Transverse colon (tissue), 4 donors: ENCODE measurements at regions of chr5 and their contacts with region 1.

Region 1: GRCh38 chr5:143824851-143825720 is 13.1 kb downstream of the HMHB1 start:
- DNase-seq: peak; percentile 86
- H3K4me3 ChIP-seq: no peak overlapping the region
- H3K27ac ChIP-seq: no peak overlapping the region
- H3K4me1 ChIP-seq: no peaks in the 10 kb centered on the region
- H3K27me3 ChIP-seq: no peaks in the 10 kb centered on the region
- CTCF ChIP-seq: peak; percentile 86 to 97 (median 94)
- EP300 ChIP-seq: no peak
- POLR2A ChIP-seq: no peak

Region 2: DNA sequence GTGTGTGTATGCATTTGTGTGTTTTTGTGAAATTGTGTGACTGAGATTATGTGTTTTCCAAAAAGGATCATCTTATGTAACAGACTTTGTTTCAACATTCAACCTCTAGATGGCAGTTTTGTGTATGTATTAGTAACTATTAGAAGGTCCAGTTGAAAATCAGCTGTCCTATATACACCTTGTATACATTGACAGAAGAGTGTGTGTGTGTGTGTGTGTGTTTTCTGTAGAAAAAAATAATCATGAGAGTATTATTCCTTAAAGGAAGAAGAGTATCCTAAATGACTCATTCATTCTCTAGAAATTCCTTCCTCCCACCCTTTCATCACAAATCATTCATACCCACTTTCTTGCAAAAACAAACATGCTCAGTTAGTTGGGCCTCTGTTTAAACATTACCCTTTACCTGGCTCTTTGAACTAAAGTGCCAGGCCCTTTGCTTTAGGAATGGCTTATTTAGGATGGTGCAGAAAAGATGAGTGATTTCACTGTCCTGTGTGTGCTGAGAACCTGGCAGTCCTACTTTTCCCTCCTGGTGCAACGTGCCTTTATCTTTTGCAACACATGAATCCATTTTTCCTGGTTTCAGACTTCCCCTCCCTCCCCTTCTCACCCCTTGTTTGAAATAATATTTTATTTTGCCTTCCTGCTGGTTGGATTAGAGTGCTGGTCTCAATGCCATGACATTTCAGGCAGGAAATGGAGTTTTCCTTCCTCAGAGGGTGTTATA is 902.7 kb before region 1 on chr5:
- in situ Hi-C with region 1: loop called in 1 of 4 experiments (anchors 10 kb)
- intact Hi-C with region 1: loop called (anchors 10 kb)
- DNase-seq: no peak
- H3K4me3 ChIP-seq: no peak overlapping the region
- H3K27ac ChIP-seq: no peak overlapping the region
- H3K4me1 ChIP-seq: peaks cover 0 to 18% (median 2%) of the 10 kb centered on the region in 4 donors
- H3K27me3 ChIP-seq: no peaks in the 10 kb centered on the region
- CTCF ChIP-seq: peak in 4 of 5 experiments; percentile 36 to 46 (median 44)
- EP300 ChIP-seq: no peak
- POLR2A ChIP-seq: no peak

Region 3: GRCh38 chr5:143002459-143003328 is 822.4 kb before region 1 on chr5:
- in situ Hi-C with region 1: loop called in 1 of 4 experiments (anchors 25 kb)
- intact Hi-C with region 1: no loop called
- DNase-seq: peak; percentile 54
- H3K4me3 ChIP-seq: no peak overlapping the region
- H3K27ac ChIP-seq: peak overlapping the region; percentile 34 to 71 (median 53)
- H3K4me1 ChIP-seq: peaks cover 0 to 33% (median 10%) of the 10 kb centered on the region in 4 donors
- H3K27me3 ChIP-seq: no peaks in the 10 kb centered on the region
- CTCF ChIP-seq: peak; percentile 29 to 44 (median 36)
- EP300 ChIP-seq: no peak
- POLR2A ChIP-seq: no peak

Region 4: GRCh38 chr5:143435210-143435657 is 389.9 kb before region 1 on chr5:
- in situ Hi-C with region 1: loop called in 1 of 4 experiments (anchors 25 kb)
- intact Hi-C with region 1: no loop called
- DNase-seq: peak; percentile 16
- H3K4me3 ChIP-seq: peak overlapping the region in 1 of 4 donors; percentile 23
- H3K27ac ChIP-seq: peak overlapping the region in 3 of 4 donors; percentile 15 to 55 (median 20)
- H3K4me1 ChIP-seq: peaks cover 0 to 3% (median 0%) of the 10 kb centered on the region in 4 donors
- H3K27me3 ChIP-seq: peaks cover 3% of the 10 kb centered on the region
- CTCF ChIP-seq: no peak
- EP300 ChIP-seq: no peak
- POLR2A ChIP-seq: no peak

Region 5: DNA sequence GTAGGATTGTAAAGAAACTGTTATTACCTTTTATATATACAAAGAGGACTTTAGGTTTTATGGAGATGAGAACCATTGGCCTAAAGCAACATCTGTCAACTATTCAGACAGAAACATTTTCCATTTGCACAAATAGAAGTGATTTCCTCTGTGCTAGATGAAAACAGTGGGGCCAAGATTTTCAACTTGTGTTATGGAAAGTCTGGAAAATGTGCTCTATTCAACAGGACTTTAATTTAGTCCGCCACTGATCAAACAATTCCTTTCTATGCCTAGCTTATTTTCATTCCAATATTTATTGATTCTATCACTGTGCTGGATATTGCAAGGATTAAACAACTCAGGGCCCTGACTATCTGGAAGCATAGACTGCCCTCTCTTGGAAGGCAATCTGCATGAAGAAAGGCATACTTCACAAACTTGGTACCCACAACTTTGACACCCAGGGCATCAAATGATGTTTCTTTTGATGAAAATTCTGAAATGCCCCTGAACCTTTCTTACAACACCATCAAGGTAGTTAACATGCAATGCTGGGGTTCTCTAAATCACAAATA is 139.8 kb before region 1 on chr5:
- in situ Hi-C with region 1: no loop called
- intact Hi-C with region 1: no loop called
- DNase-seq: no peak
- H3K4me3 ChIP-seq: no peak overlapping the region
- H3K27ac ChIP-seq: no peak overlapping the region
- H3K4me1 ChIP-seq: no peaks in the 10 kb centered on the region
- H3K27me3 ChIP-seq: no peaks in the 10 kb centered on the region
- CTCF ChIP-seq: no peak
- EP300 ChIP-seq: no peak
- POLR2A ChIP-seq: no peak

Region 6: DNA sequence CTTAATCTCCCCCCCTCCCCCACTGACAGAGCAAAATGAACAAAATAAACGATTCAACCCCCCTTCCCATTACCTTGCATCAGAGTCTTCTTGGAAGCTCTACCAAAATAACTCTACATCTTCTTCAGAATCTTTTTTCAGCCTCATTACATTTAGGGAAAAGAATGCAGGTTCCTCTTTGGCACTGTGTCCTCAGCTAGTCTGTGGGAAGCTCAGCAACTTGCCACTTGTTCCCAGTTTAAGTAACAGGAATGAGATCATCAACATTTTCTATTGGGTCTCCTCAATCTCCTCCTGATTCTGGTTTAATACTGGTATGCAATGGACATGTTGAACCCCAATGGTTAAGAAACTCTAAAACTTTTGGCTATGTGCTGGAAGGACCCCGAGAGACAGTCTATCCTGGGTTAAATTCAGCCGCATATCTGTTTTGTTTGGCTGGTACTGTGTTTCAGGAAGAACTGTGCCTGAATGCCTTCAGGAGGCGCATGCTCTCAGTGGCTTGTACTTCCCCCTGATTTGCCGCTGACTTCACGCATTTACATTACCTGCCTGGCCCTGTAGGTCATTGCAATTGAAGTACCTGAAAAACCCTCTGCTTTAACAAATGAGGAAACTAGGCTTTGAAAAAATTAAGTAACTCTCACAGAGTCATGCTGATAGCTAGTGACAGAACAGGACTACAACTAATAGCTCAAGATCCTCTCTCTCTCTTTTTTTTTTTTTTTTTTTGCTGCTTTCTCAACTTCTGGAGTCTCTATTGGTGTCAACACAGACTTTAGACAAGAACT is 91.2 kb before region 1 on chr5:
- in situ Hi-C with region 1: no loop called
- intact Hi-C with region 1: no loop called
- DNase-seq: no peak
- H3K4me3 ChIP-seq: no peak overlapping the region
- H3K27ac ChIP-seq: no peak overlapping the region
- H3K4me1 ChIP-seq: no peaks in the 10 kb centered on the region
- H3K27me3 ChIP-seq: no peaks in the 10 kb centered on the region
- CTCF ChIP-seq: no peak
- EP300 ChIP-seq: no peak
- POLR2A ChIP-seq: no peak

Region 7: GRCh38 chr5:143886651-143887638 is 61.9 kb after region 1 on chr5:
- in situ Hi-C with region 1: no loop called
- intact Hi-C with region 1: no loop called
- DNase-seq: no peak
- H3K4me3 ChIP-seq: no peak overlapping the region
- H3K27ac ChIP-seq: peak overlapping the region in 1 of 4 donors; percentile 17
- H3K4me1 ChIP-seq: peaks cover 0 to 18% (median 6%) of the 10 kb centered on the region in 4 donors
- H3K27me3 ChIP-seq: no peaks in the 10 kb centered on the region
- CTCF ChIP-seq: no peak
- EP300 ChIP-seq: no peak
- POLR2A ChIP-seq: no peak

Region 8: GRCh38 chr5:144405991-144406390 is 580.9 kb after region 1 on chr5:
- in situ Hi-C with region 1: no loop called
- intact Hi-C with region 1: no loop called
- DNase-seq: no peak
- H3K4me3 ChIP-seq: no peak overlapping the region
- H3K27ac ChIP-seq: no peak overlapping the region
- H3K4me1 ChIP-seq: no peaks in the 10 kb centered on the region
- H3K27me3 ChIP-seq: no peaks in the 10 kb centered on the region
- CTCF ChIP-seq: no peak
- EP300 ChIP-seq: no peak
- POLR2A ChIP-seq: no peak